A549 (cell line): ENCODE measurements at regions of chr14 and their contacts with region 1.

Region 1: GRCh38 chr14:96741151-96741977 is 55.8 kb upstream of the VRK1 start:
- DNase-seq: peak; percentile 39 to 64
- ATAC-seq: peak; percentile 77 to 91
- H3K4me3 ChIP-seq: peak overlapping the region; percentile 51
- H3K27ac ChIP-seq: peak overlapping the region in 1 of 2 experiments; percentile 38; a peak in 1 of 6 replicates
- H3K4me1 ChIP-seq: no peaks in the 10 kb centered on the region
- CTCF ChIP-seq: peak; percentile 77
- EP300 ChIP-seq: no peak
- POLR2A ChIP-seq: no peak
- RAD21 ChIP-seq: peak; percentile 77 to 90

Region 2: GRCh38 chr14:96567289-96567899 is 174.0 kb before region 1 on chr14:
- CTCF ChIA-PET with region 1: interaction called, 30 read pairs
- POLR2A ChIA-PET with region 1: no interaction called
- DNase-seq: peak; percentile 31 to 36
- ATAC-seq: peak; percentile 91 to 93
- H3K4me3 ChIP-seq: no peak overlapping the region
- H3K27ac ChIP-seq: no peak overlapping the region
- H3K4me1 ChIP-seq: peaks cover 3% of the 10 kb centered on the region; the same call in 1 of the 3 replicates
- CTCF ChIP-seq: peak; percentile 72
- EP300 ChIP-seq: no peak
- POLR2A ChIP-seq: no peak
- RAD21 ChIP-seq: peak; percentile 42 to 47; a peak in 4 of 5 replicates

Region 3: GRCh38 chr14:96584199-96584906 is 157.0 kb before region 1 on chr14:
- CTCF ChIA-PET with region 1: interaction called, 11 read pairs
- POLR2A ChIA-PET with region 1: no interaction called
- DNase-seq: peak; percentile 57 to 62
- ATAC-seq: peak; percentile 76 to 93
- H3K4me3 ChIP-seq: no peak overlapping the region
- H3K27ac ChIP-seq: no peak overlapping the region
- H3K4me1 ChIP-seq: no peaks in the 10 kb centered on the region
- CTCF ChIP-seq: peak; percentile 61
- EP300 ChIP-seq: no peak
- POLR2A ChIP-seq: no peak
- RAD21 ChIP-seq: peak; percentile 86 to 88

Region 4: GRCh38 chr14:96713426-96713825 is 27.9 kb before region 1 on chr14:
- CTCF ChIA-PET with region 1: interaction called, 12 read pairs
- POLR2A ChIA-PET with region 1: no interaction called
- DNase-seq: no peak
- ATAC-seq: no peak
- H3K4me3 ChIP-seq: no peak overlapping the region
- H3K27ac ChIP-seq: no peak overlapping the region
- H3K4me1 ChIP-seq: no peaks in the 10 kb centered on the region
- CTCF ChIP-seq: no peak
- EP300 ChIP-seq: no peak
- POLR2A ChIP-seq: no peak
- RAD21 ChIP-seq: no peak

Region 5: GRCh38 chr14:96729889-96730288 is 11.5 kb before region 1 on chr14:
- CTCF ChIA-PET with region 1: interaction called, 11 read pairs
- POLR2A ChIA-PET with region 1: no interaction called
- DNase-seq: no peak
- ATAC-seq: no peak
- H3K4me3 ChIP-seq: no peak overlapping the region
- H3K27ac ChIP-seq: no peak overlapping the region
- H3K4me1 ChIP-seq: no peaks in the 10 kb centered on the region
- CTCF ChIP-seq: no peak
- EP300 ChIP-seq: no peak
- POLR2A ChIP-seq: no peak
- RAD21 ChIP-seq: no peak

Region 6: GRCh38 chr14:96805956-96806355 is 64.6 kb after region 1 on chr14:
- CTCF ChIA-PET with region 1: no interaction called
- POLR2A ChIA-PET with region 1: no interaction called
- DNase-seq: no peak
- ATAC-seq: no peak
- H3K4me3 ChIP-seq: no peak overlapping the region
- H3K27ac ChIP-seq: no peak overlapping the region
- H3K4me1 ChIP-seq: peaks cover 10% of the 10 kb centered on the region; the same call in 1 of the 3 replicates
- CTCF ChIP-seq: no peak
- EP300 ChIP-seq: no peak
- POLR2A ChIP-seq: no peak
- RAD21 ChIP-seq: no peak

Region 7: GRCh38 chr14:96901227-96901626 is 159.9 kb after region 1 on chr14:
- CTCF ChIA-PET with region 1: no interaction called
- POLR2A ChIA-PET with region 1: no interaction called
- DNase-seq: no peak
- ATAC-seq: no peak
- H3K4me3 ChIP-seq: no peak overlapping the region
- H3K27ac ChIP-seq: no peak overlapping the region
- H3K4me1 ChIP-seq: peaks cover 7% of the 10 kb centered on the region; the same call in 1 of the 3 replicates
- CTCF ChIP-seq: no peak
- EP300 ChIP-seq: no peak
- POLR2A ChIP-seq: no peak
- RAD21 ChIP-seq: no peak

Region 8: GRCh38 chr14:96953077-96953874 is 211.9 kb after region 1 on chr14:
- CTCF ChIA-PET with region 1: no interaction called
- POLR2A ChIA-PET with region 1: no interaction called
- DNase-seq: no peak
- ATAC-seq: no peak
- H3K4me3 ChIP-seq: no peak overlapping the region
- H3K27ac ChIP-seq: no peak overlapping the region
- H3K4me1 ChIP-seq: no peaks in the 10 kb centered on the region
- CTCF ChIP-seq: no peak
- EP300 ChIP-seq: no peak
- POLR2A ChIP-seq: no peak
- RAD21 ChIP-seq: no peak